Esophagus squamous epithelium (tissue), 5 donors: ENCODE measurements at regions of chr19 and their contacts with region 1.

Region 1: DNA sequence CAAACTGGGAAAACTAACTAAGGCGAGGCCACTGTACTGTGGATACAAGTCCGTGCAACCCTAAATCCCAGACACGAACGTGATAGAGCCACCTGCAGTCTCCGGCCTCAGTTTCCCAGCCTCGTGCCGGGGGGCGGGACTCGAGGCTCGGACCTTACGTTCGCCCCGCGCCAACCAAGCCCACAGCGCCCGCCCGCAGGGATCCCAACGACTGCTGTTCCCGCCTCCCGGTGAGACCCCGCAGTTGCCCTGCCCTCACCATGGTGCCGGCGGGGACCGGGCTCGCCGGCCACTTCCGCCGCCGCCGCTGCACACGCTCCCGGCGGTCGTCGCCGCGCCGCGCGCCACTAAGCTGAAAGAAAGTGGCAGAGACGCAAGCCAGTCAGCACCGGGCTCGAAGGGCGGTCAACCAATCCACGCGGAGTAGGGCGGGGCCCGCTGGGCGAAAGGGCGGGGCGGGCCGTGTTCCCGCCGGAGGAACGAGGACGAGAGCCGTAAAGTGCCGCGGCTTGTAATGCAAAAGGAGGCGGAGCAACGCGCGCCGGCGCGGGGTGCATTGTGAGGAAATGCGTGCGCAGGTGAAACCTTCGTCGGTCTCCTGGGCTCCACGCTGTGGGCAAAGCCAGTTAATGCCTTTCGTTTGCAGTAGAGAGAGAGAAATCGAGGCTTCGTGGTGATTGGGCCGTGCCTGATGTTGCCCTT is at the start of gene LSM4:
- DNase-seq: peak; percentile 94
- H3K4me3 ChIP-seq: peak within 1 kb of the TSS; percentile 56 to 85 (median 68)
- H3K27ac ChIP-seq: peak within 1 kb of the TSS; percentile 88 to 97 (median 94)
- H3K4me1 ChIP-seq: peaks cover 35 to 62% (median 50%) of the 10 kb centered on the region in 3 donors
- H3K27me3 ChIP-seq: no peaks in the 10 kb centered on the region
- CTCF ChIP-seq: peak in 3 of 6 experiments; percentile 13 to 49 (median 41)
- POLR2A ChIP-seq: peak in 3 of 4 donors; percentile 4 to 94 (median 78)
- total RNA-seq, gene LSM4: 97.3 to 228 (median 137) TPM

Region 2: DNA sequence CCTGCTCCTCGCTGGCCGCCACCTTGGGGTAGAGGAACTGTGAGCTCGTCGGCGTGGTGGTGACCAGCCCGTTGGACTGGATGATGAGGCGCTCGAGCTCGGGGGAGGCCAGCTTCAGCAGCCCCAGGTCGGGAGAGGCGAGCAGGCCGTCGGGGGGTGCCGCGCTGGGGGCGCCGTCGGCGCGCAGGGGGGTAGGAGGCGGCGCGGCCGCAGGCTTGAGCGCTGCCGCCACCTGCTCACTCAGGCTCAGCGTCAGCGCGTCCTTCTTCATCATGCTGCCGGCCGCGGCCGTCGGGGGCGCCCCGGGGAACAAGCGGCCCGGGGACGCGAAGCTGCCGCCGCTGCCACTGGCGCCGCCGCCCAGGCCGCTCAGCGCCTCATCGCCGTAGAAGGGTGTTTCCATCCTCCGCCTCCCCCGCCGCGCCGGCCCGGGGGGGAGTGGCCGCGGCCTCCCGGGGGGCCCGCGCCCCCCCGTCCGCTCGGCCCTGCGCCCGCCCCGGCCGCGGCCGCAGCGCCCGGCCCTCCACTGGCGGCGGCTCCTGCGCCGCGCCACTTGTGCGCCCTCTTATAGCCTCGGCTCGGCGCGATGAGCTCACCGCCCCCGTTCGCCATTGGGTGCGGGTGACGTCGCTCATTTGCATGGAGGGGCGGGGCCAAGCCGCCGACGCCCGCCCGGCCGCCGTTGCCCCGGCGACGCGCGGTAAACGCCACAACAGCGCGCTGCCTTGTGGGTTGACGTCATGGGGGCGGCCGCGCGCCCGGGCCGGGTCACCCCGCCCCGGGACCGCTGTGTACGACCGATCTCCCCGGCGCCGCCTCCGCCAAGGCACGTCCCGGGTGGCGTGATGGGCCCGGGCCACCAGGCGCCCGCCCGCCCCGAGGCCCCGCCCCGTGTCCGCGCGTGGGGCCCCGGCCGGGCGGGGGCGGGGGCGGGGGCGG is 41.6 kb before region 1 on chr19 and contains the start of gene JUND:
- intact Hi-C with region 1: loop called (anchors 2 kb)
- DNase-seq: peak; percentile 85
- H3K4me3 ChIP-seq: peak within 1 kb of the TSS; percentile 85 to 99 (median 96)
- H3K27ac ChIP-seq: peak within 1 kb of the TSS; percentile 100
- H3K4me1 ChIP-seq: peaks cover 16 to 63% (median 31%) of the 10 kb centered on the region in 3 donors
- H3K27me3 ChIP-seq: no peaks in the 10 kb centered on the region
- CTCF ChIP-seq: peak in 2 of 6 experiments; percentile 3 to 16
- POLR2A ChIP-seq: peak in 3 of 4 donors; percentile 98 to 99 (median 99)
- total RNA-seq, gene JUND: 71.7 to 192 (median 166) TPM